Colonic mucosa (tissue), 4 donors: ENCODE measurements at regions of chr1 and their contacts with region 1.

Region 1: DNA sequence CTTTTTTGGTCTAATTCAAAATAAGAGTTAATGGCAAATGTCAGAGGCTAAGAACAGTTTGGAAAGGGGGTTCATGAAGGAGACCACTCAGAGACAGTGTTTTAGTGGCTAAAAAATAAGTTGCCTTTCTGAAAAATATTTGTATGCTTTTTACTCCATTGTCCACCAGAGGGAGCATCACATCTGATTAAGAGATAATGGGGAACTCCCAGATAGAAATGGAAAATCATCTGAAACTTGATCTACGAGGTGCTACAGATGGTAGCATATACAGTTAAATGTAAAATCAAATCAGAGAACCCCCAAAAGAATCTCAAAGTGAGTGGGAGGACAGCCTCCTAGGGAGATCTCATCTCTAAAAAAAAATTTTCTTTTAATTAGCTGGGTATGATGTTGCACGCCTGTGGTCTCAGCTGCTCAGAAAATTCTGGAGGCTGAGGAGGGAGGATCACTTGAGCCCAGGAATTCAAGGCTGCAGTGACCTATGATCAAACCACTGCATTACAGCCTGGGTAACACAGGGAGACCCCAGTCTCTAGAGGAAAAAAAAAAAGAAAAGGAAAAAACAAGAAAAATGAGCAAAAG is 9.7 kb downstream of the SMYD3 start:
- DNase-seq: no peak
- H3K4me3 ChIP-seq: no peak overlapping the region
- H3K27ac ChIP-seq: no peak overlapping the region
- H3K4me1 ChIP-seq: no peaks in the 10 kb centered on the region
- H3K27me3 ChIP-seq: no peaks in the 10 kb centered on the region
- CTCF ChIP-seq: peak; percentile 44

Region 2: GRCh38 chr1:246699095-246699735 is 201.8 kb after region 1 on chr1:
- intact Hi-C with region 1: loop called (anchors 5 kb)
- DNase-seq: peak; percentile 95
- H3K4me3 ChIP-seq: no peak overlapping the region
- H3K27ac ChIP-seq: no peak overlapping the region
- H3K4me1 ChIP-seq: no peaks in the 10 kb centered on the region
- H3K27me3 ChIP-seq: no peaks in the 10 kb centered on the region
- CTCF ChIP-seq: peak; percentile 83

Region 3: GRCh38 chr1:246753670-246754535 is 256.5 kb after region 1 on chr1:
- intact Hi-C with region 1: loop called (anchors 5 kb)
- DNase-seq: peak; percentile 73
- H3K4me3 ChIP-seq: no peak overlapping the region
- H3K27ac ChIP-seq: no peak overlapping the region
- H3K4me1 ChIP-seq: no peaks in the 10 kb centered on the region
- H3K27me3 ChIP-seq: no peaks in the 10 kb centered on the region
- CTCF ChIP-seq: peak; percentile 84